ENCODE measurements at regions of chr11 and their contacts with region 1.

Region 1: DNA sequence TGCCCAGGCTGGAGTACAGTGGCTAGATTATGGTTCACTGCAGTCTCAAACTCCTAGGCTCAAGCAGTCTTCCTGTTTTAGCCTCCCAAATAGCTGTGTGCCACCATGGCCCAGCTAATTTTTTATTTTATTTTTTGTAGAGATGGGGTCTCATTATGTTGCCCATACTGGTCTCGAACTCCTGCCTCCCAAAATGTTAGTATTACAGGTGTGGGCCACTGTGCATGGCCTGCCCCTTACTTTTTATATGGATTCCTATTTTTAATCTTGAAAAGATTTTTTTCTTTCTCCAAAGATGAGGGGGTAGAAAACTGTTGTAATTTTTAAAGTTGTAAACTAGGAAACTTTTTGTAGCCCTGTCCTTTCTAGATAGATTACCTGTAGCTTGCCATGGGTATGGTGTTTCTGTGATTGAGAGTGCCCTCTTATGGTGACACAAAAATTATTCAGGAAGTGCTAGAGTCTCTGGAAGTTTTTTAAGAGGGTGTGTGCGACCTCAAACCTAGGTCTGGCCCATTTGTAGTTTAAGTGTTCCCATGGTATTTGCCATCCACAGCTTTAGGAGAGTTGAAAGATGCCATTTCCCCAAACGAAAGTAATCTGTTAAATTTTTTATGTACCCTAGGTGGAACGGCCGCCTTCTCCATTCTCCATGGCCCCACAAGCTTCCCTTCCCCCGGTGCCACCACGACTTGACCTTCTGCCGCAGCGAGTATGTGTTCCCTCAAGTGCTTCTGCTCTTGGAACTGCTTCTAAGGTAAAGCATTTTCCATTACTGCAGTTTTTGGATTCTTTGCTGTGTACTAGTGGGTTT is 32.4 kb downstream of the MCAM start:
- DNase-seq: no peak
- ATAC-seq: peak; percentile 93
- H3K4me3 Mint-ChIP-seq: no peak overlapping the region
- H3K27ac Mint-ChIP-seq: peak overlapping the region; percentile 5
- H3K4me1 Mint-ChIP-seq: peaks cover 19% of the 10 kb centered on the region
- H3K27me3 Mint-ChIP-seq: no peaks in the 10 kb centered on the region
- CTCF ChIP-seq: no peak

Region 2: DNA sequence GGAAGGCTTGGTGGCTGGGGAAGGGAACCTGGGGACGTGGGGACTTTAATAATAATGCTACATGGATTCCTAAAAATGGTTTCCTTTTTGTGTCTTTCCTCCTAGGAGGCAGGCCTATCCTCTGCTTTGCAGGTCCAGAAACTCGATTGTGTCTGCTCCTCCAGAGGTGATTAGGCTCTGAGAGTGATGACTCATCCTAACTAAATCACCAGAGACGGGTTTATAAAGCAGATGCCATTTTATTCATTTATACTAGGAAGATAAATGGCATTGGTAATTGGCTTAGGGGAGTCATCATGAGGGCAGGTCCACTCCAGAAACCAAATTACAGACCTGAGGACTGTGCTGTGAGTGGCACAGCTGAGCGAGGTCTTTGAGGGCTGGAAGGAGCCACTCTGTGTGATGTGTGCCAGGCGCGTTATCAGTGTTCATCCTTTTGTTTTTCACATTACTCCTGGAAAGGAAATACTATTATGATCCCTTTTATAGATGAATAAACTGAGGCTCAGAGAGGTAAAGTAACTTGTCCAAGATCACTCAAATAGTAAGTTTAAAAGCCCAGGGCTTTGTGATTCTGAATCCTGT is 109.0 kb before region 1 on chr11:
- CTCF ChIA-PET with region 1: no interaction called
- POLR2A ChIA-PET with region 1: no interaction called
- intact Hi-C with region 1: no loop called
- DNase-seq: no peak
- ATAC-seq: peak; percentile 27
- H3K4me3 Mint-ChIP-seq: no peak overlapping the region
- H3K27ac Mint-ChIP-seq: no peak overlapping the region
- H3K4me1 Mint-ChIP-seq: peaks cover 15% of the 10 kb centered on the region
- H3K27me3 Mint-ChIP-seq: no peaks in the 10 kb centered on the region
- CTCF ChIP-seq: no peak

Region 3: DNA sequence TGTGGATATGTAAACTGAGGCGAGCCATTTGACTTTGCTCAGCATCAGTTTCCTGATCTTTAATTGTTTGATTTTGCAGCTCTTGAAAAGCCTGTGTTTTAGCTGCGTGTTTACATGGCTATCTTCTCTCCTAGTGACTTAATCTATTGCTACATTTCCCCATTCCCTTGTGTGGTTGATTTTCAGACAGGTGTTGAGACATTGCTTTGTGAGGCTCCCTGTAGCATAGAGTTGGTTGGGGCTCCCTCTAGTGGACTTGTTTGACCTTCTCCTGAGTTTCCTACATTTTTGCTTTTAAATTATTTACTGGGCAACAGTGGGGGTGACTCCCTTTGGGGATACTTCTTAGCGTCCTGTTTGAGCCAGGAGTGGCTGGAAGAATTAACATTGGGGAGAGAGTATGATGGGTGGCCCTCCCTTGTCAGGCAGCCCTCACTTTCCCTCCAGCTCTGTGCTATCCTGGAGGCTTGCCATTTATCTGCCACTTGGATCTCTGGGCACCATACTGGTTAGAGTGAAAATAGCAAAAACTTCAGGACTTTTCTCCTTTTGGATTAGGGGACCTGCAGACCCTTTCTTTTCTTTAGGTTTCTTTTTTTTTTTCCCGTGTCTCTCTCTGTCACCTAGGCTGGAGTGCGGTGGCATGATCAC is 87.6 kb before region 1 on chr11:
- CTCF ChIA-PET with region 1: interaction called, 25 read pairs
- POLR2A ChIA-PET with region 1: no interaction called
- intact Hi-C with region 1: no loop called
- DNase-seq: peak; percentile 83
- ATAC-seq: peak; percentile 96
- H3K4me3 Mint-ChIP-seq: no peak overlapping the region
- H3K27ac Mint-ChIP-seq: no peak overlapping the region
- H3K4me1 Mint-ChIP-seq: peaks cover 2% of the 10 kb centered on the region
- H3K27me3 Mint-ChIP-seq: no peaks in the 10 kb centered on the region
- CTCF ChIP-seq: peak; percentile 80

Region 4: GRCh38 chr11:119262668-119263351 is 21.7 kb before region 1 on chr11:
- CTCF ChIA-PET with region 1: interaction called, 11 read pairs
- POLR2A ChIA-PET with region 1: interaction called, 15 read pairs
- intact Hi-C with region 1: no loop called
- DNase-seq: peak; percentile 15
- ATAC-seq: peak; percentile 83
- H3K4me3 Mint-ChIP-seq: no peak overlapping the region
- H3K27ac Mint-ChIP-seq: no peak overlapping the region
- H3K4me1 Mint-ChIP-seq: peaks cover 52% of the 10 kb centered on the region
- H3K27me3 Mint-ChIP-seq: no peaks in the 10 kb centered on the region
- CTCF ChIP-seq: peak; percentile 28

Region 5: DNA sequence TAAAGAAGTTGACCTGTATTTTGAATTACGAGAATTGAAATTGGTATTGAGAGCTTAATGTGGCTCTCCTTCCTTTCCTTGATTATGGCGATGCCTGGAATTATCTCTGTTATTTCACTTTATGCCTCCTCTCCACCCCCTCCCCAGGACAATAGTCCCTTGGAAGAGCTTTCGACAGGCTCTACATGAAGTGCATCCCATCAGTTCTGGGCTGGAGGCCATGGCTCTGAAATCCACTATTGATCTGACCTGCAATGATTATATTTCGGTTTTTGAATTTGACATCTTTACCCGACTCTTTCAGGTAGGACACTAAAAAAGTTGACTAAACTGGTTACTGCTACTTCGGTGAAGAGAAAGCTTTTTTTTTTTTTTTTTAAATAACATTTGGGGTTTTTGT is 10.8 kb before region 1 on chr11:
- CTCF ChIA-PET with region 1: interaction called, 22 read pairs
- POLR2A ChIA-PET with region 1: interaction called, 15 read pairs
- intact Hi-C with region 1: no loop called
- DNase-seq: no peak
- ATAC-seq: no peak
- H3K4me3 Mint-ChIP-seq: no peak overlapping the region
- H3K27ac Mint-ChIP-seq: no peak overlapping the region
- H3K4me1 Mint-ChIP-seq: peaks cover 12% of the 10 kb centered on the region
- H3K27me3 Mint-ChIP-seq: no peaks in the 10 kb centered on the region
- CTCF ChIP-seq: no peak